ENCODE measurements at regions of chr9 and their contacts with region 1.

Region 1: GRCh38 chr9:134365791-134366688 is 39.8 kb downstream of the RXRA start:
- DNase-seq: peak; percentile 78 to 93 (median 90)
- H3K4me3 ChIP-seq: peak overlapping the region in 31 of 59 donors; percentile 0 to 50 (median 22)
- H3K27ac ChIP-seq: peak overlapping the region in 55 of 59 donors; percentile 12 to 84 (median 66)
- H3K27me3 ChIP-seq: no peaks in the 10 kb centered on the region
- CTCF ChIP-seq: peak in 14 of 56 donors; percentile 2 to 34 (median 14)

Region 2: DNA sequence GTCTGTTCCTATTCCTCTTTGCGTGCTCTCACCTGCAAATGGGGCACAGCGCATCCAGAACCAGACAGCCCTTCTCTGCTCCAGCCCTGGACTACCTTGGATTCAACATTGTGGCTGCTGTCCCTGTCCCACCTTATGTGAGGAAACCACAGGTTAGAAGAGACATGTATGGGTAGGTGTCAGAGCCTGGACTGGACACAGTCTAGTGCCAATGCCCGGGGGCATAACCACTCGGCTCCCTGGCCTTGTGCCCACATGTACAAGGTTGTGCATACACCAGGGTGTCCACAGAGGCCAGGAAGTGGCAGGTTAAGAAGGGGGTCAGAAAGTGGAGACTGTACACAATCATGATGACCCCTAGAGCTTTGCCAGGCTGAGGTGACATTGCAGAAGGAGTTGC is 276.1 kb before region 1 on chr9:
- intact Hi-C with region 1: no loop called
- DNase-seq: no peak
- H3K4me3 ChIP-seq: no peak overlapping the region
- H3K27ac ChIP-seq: no peak overlapping the region
- H3K27me3 ChIP-seq: peaks cover 0 to 3% (median 0%) of the 10 kb centered on the region in 45 donors
- CTCF ChIP-seq: no peak

Region 3: GRCh38 chr9:134325817-134326723 is 40.0 kb before region 1 on chr9 and contains the start of gene RXRA:
- intact Hi-C with region 1: loop called in 1 of 2 experiments (anchors 5 kb)
- DNase-seq: peak in 9 of 10 donors; percentile 42 to 78 (median 57)
- H3K4me3 ChIP-seq: peak within 1 kb of the TSS; percentile 57 to 95 (median 76)
- H3K27ac ChIP-seq: peak within 1 kb of the TSS; percentile 18 to 96 (median 90)
- H3K27me3 ChIP-seq: no peaks in the 10 kb centered on the region
- CTCF ChIP-seq: peak in 15 of 56 donors; percentile 7 to 32 (median 19)
- total RNA-seq, gene RXRA: 32.1 to 133 (median 55.1) TPM

Region 4: DNA sequence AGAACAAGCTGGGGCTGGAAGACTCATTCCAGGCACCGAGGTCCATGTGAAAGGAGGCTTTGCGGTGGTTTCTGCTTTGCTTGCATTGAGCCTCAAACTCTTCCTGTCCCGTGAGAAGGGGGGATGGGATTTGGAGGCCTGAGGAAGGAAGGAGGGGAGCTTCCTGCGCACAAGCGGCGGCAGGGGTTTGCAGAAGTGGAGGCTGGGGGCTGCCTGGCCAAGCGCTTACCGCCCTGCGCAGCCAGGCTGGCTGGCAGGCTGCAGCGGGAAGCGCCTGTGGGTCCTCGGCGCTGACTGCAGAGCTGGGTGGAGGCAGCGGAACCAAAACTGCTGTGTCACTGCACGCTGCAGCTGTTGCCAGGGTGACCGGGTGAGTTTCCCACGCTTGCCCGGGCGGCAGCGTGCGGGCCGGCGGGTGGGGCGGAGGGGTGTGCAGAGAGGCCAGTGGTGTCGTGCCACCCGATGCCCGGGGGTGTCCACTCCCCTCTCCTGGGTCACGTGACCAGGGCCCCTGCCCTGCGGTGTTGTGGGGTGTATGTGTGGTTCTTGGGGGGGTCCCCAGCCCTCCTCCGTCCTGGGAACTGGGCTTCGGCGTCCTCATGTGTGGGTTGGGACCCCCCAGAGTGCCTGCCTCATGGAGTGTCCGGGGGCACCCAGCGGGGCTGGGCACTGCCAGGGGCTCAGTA is 41.2 kb after region 1 on chr9:
- intact Hi-C with region 1: loop called in 1 of 2 experiments (anchors 5 kb)
- DNase-seq: peak; percentile 54 to 96 (median 90)
- H3K4me3 ChIP-seq: peak overlapping the region; percentile 22 to 68 (median 48)
- H3K27ac ChIP-seq: peak overlapping the region; percentile 44 to 98 (median 88)
- H3K27me3 ChIP-seq: no peaks in the 10 kb centered on the region
- CTCF ChIP-seq: peak in 11 of 56 donors; percentile 8 to 49 (median 14)

Region 5: DNA sequence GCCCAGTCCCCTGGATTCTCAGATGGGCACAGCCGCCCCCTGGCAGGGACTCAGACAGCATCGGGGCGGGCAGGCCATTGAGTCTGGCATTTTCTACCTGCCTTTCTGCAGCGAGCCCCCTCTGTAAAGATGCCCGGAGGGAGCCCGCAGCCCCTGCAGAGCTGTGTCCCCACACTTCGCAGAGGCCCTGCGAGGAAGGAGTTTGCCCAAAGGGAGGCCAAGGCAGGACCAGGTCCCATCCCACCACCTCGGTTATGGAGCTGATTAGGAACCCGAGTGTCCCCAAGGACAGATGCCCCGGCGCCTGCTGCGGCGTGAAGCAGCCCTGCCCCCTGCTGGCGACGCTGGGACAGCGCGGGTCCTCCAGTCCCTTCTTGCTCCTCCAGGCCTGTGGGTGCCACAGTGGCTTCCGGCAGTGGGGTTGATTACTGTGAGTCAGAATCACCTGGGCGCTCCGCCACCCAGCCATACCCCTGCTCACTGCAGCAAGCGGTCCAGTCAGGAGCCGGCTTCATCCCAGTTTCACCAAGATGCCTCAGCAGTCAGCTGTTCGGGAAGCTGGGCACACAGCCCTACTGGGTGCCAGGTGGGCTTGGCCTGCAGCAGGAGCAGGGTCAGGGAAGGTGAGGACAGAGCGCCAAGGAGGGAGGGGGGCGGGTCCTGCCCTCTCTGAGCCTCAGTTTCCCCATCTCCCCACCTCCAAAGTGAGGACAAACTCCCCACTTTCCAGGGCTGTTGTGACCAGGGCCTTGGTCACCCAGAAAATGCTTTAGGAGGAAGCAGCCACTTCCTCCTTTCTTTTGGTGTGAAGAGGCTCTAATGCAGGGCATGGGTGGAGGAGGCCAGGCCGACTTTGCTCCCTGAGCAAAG is 77.4 kb after region 1 on chr9:
- intact Hi-C with region 1: loop called (anchors 2 to 5 kb)
- DNase-seq: peak; percentile 85 to 95 (median 90)
- H3K4me3 ChIP-seq: peak overlapping the region in 13 of 59 donors; percentile 7 to 37 (median 19)
- H3K27ac ChIP-seq: peak overlapping the region in 33 of 59 donors; percentile 0 to 69 (median 35)
- H3K27me3 ChIP-seq: peaks cover 0 to 3% (median 0%) of the 10 kb centered on the region in 45 donors
- CTCF ChIP-seq: peak; percentile 94 to 100 (median 99)

Measured in dorsolateral prefrontal cortex (tissue), 120 donors.